Activated B cell treated with CpG ODN at 0.5 μM for 24 hours (primary cell): ENCODE measurements at regions of chr6 and their contacts with region 1.

Region 1: GRCh38 chr6:73675466-73676098 is 20.4 kb upstream of the CD109 start:
- DNase-seq: peak; percentile 20
- ATAC-seq: peak; percentile 83
- H3K4me3 Mint-ChIP-seq: no peak overlapping the region
- H3K27ac Mint-ChIP-seq: no peak overlapping the region
- H3K4me1 Mint-ChIP-seq: no peaks in the 10 kb centered on the region
- H3K27me3 Mint-ChIP-seq: peaks cover 11% of the 10 kb centered on the region
- CTCF ChIP-seq: peak; percentile 83

Region 2: DNA sequence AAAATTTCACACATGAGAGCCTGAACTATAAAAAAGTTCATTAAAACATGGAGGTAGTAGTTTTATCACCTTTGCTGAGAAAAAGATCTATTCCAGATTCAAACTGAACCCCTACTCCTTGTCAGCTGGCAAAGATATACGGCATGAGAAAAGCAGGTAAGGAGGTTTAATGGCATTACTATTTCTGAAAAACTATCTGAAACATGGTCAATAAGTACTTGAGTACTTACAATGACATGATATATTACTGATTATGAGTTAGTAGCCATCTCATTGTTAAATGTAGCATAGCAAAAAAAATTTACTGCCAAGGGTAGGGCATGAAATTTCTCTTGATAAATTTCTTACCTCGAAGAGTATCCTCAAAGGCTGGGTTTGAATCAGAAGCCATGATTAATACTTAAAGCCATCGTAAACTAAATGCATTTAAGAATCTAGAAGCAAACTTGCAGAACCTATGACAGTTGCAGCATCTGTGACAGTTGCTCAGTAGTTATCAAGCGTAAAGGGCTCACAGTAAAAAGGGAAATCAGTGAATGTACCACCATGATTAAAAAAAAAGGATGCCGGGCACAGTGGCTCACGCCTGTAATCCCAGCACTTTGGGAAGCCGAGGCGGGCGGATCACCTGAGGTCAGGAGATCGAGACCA is 30.5 kb before region 1 on chr6:
- CTCF ChIA-PET with region 1: no interaction called
- POLR2A ChIA-PET with region 1: no interaction called
- intact Hi-C with region 1: no loop called
- DNase-seq: no peak
- ATAC-seq: peak; percentile 54
- H3K4me3 Mint-ChIP-seq: peak overlapping the region; percentile 82
- H3K27ac Mint-ChIP-seq: peak overlapping the region; percentile 50
- H3K4me1 Mint-ChIP-seq: peaks cover 9% of the 10 kb centered on the region
- H3K27me3 Mint-ChIP-seq: no peaks in the 10 kb centered on the region
- CTCF ChIP-seq: no peak

Region 3: GRCh38 chr6:73732845-73733675 is 57.5 kb after region 1 on chr6:
- CTCF ChIA-PET with region 1: interaction called, 30 read pairs
- POLR2A ChIA-PET with region 1: no interaction called
- intact Hi-C with region 1: loop called (anchors 1 kb)
- DNase-seq: peak; percentile 27
- ATAC-seq: peak; percentile 95
- H3K4me3 Mint-ChIP-seq: no peak overlapping the region
- H3K27ac Mint-ChIP-seq: no peak overlapping the region
- H3K4me1 Mint-ChIP-seq: peaks cover 3% of the 10 kb centered on the region
- H3K27me3 Mint-ChIP-seq: peaks cover 3% of the 10 kb centered on the region
- CTCF ChIP-seq: peak; percentile 60